Activated CD4-positive, alpha-beta memory T cell treated with anti-CD3 and anti-CD28 coated beads for 36 hours (primary cell): ENCODE measurements at regions of chr1 and their contacts with region 1.

Region 1: DNA sequence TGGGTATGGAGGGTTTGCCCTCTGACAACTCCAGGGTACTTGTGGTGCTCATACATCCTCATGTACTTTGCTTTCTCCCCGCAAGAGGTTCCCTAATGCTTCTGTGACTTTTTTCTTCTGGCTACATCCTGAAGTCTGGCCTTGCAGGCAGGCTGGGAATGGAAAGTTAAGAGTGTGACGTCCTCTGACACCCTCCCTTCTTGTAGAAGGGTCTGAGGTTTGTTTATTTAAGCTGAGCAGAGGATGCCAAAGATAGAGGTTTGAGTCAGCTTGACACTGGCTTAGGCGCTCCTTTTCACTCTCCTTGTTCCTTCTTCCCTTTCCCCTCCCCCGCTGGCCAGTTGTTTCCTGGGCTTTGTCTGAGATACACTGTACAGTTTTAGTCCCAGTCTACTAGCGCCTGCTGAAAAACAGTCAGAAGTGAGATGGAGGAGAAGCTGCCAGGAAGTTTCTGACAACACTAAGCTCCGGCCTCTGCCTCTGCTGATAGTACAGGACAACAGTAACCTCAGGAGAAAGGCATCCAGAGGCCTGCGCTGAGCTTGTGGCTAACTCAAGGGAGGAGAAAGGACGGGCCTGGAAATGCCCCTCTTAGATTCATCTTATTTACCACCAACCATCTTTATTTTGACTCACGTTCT is at the start of gene MACF1:
- DNase-seq: peak; percentile 72
- H3K4me3 Mint-ChIP-seq: peak within 1 kb of the TSS; percentile 81
- H3K27ac Mint-ChIP-seq: peak within 1 kb of the TSS; percentile 96
- H3K4me1 Mint-ChIP-seq: peaks cover 48% of the 10 kb centered on the region
- H3K27me3 Mint-ChIP-seq: no peaks in the 10 kb centered on the region
- total RNA-seq, gene MACF1: 239 to 240 TPM

Region 2: GRCh38 chr1:39091845-39092645 is 112.5 kb before region 1 on chr1:
- CTCF ChIA-PET with region 1: no interaction called
- POLR2A ChIA-PET with region 1: no interaction called
- intact Hi-C with region 1: no loop called
- DNase-seq: peak; percentile 77
- H3K4me3 Mint-ChIP-seq: no peak overlapping the region
- H3K27ac Mint-ChIP-seq: no peak overlapping the region
- H3K4me1 Mint-ChIP-seq: peaks cover 6% of the 10 kb centered on the region
- H3K27me3 Mint-ChIP-seq: peaks cover 3% of the 10 kb centered on the region

Region 3: DNA sequence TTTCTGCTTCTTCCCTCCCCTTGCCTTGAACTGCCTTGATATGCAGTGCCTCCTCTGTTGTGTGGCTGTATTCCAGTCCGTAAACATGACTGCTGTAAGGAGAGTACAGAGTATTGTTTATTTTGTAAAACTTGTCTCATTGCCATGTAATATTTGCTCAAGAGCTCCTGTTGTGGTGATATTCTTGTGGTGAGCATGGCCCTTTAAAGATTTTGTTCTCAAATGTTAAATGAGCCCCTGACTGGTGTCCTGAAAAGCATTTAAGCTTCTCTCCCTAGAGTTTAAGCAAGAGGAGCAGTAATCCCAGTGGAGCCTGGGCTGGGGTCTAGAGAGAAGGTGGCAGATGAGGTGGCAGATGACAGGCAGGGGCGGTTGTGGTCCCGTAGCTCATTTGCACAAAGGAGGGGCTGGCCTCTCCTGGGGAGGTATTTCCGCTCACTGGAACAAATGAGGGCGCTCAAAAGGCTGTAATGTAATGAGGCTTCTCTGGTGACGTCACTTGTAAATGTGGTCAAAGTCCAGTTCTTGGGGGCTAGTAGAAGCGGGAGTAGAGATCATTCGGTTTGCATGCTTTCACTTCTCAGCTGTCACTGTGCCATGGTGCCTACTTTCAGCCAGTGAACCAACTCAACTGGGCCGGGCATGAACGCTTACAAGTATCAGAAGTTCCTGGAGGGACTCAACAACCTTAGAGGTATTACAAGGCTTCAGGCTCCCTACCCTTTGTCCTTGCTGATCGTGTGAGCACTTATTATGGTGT is 46.1 kb before region 1 on chr1:
- CTCF ChIA-PET with region 1: no interaction called
- POLR2A ChIA-PET with region 1: no interaction called
- intact Hi-C with region 1: no loop called
- DNase-seq: no peak
- H3K4me3 Mint-ChIP-seq: no peak overlapping the region
- H3K27ac Mint-ChIP-seq: no peak overlapping the region
- H3K4me1 Mint-ChIP-seq: peaks cover under 1% of the 10 kb centered on the region
- H3K27me3 Mint-ChIP-seq: peaks cover 1% of the 10 kb centered on the region

Region 4: GRCh38 chr1:39183503-39184353 is 20.8 kb before region 1 on chr1:
- CTCF ChIA-PET with region 1: interaction called, 25 read pairs
- POLR2A ChIA-PET with region 1: interaction called, 12 read pairs
- intact Hi-C with region 1: no loop called
- DNase-seq: peak; percentile 91
- H3K4me3 Mint-ChIP-seq: peak overlapping the region; percentile 11
- H3K27ac Mint-ChIP-seq: peak overlapping the region; percentile 91
- H3K4me1 Mint-ChIP-seq: peaks cover 51% of the 10 kb centered on the region
- H3K27me3 Mint-ChIP-seq: no peaks in the 10 kb centered on the region

Region 5: GRCh38 chr1:39214998-39215873 is 10.7 kb after region 1 on chr1:
- CTCF ChIA-PET with region 1: interaction called, 19 read pairs
- POLR2A ChIA-PET with region 1: interaction called, 93 read pairs
- intact Hi-C with region 1: loop called (anchors 1 kb)
- DNase-seq: peak; percentile 65
- H3K4me3 Mint-ChIP-seq: peak overlapping the region; percentile 88
- H3K27ac Mint-ChIP-seq: peak overlapping the region; percentile 88
- H3K4me1 Mint-ChIP-seq: peaks cover 54% of the 10 kb centered on the region
- H3K27me3 Mint-ChIP-seq: no peaks in the 10 kb centered on the region

Region 6: DNA sequence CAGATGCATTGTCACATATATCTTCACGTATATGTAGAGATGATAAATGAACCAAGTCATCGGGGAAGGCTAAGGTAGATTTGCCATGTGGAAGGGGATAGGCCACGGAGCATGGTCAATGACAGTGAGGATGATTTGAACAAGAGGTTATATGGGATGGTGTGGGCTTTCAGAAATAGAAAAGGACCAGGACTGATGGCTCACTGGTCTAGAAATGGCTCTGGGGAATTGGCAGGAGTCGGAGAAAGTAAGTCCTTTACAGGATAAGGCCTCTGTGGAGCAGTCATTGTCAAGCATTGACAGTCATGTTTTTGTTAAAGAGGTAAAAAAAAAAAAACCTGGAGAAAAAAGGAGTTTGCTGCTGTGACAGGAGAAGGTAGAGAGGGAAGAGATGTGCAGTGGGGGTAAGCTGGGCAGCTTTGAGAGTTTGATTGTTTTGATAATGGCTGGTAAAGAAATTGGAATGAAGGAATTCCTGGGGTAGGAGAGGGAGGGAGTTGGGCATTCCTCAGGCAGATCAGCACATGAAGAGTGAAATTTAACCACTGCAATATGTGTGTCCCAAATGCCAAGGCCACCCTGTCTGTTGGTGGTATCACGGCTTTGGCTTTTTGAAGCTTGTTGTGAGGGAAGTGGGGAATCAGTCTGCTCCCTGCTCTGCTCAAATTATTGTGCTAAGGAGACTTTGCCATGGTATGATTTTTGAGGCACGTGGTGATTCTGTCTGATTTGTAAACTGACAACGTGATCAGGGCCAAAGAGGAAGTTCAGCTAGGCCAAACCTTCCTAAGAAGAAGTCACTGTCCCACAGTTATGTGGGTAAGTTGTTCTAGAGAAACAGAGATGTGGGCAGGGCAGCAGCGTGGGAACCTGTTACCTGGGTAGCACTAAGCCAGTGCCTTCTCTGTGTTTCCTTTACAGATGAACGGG is 26.0 kb after region 1 on chr1:
- CTCF ChIA-PET with region 1: interaction called, 11 read pairs
- POLR2A ChIA-PET with region 1: interaction called, 4 read pairs
- intact Hi-C with region 1: no loop called
- DNase-seq: peak; percentile 59
- H3K4me3 Mint-ChIP-seq: peak overlapping the region; percentile 46
- H3K27ac Mint-ChIP-seq: peak overlapping the region; percentile 72
- H3K4me1 Mint-ChIP-seq: peaks cover 57% of the 10 kb centered on the region
- H3K27me3 Mint-ChIP-seq: no peaks in the 10 kb centered on the region

Region 7: GRCh38 chr1:39258146-39258924 is 53.8 kb after region 1 on chr1:
- CTCF ChIA-PET with region 1: interaction called, 37 read pairs
- POLR2A ChIA-PET with region 1: interaction called, 13 read pairs
- intact Hi-C with region 1: loop called (anchors 1 kb)
- DNase-seq: peak; percentile 74
- H3K4me3 Mint-ChIP-seq: no peak overlapping the region
- H3K27ac Mint-ChIP-seq: peak overlapping the region; percentile 56
- H3K4me1 Mint-ChIP-seq: peaks cover 44% of the 10 kb centered on the region
- H3K27me3 Mint-ChIP-seq: no peaks in the 10 kb centered on the region

Region 8: GRCh38 chr1:39268112-39268581 is 63.6 kb after region 1 on chr1:
- CTCF ChIA-PET with region 1: no interaction called
- POLR2A ChIA-PET with region 1: interaction called, 13 read pairs
- intact Hi-C with region 1: no loop called
- DNase-seq: peak; percentile 39
- H3K4me3 Mint-ChIP-seq: peak overlapping the region; percentile 64
- H3K27ac Mint-ChIP-seq: peak overlapping the region; percentile 81
- H3K4me1 Mint-ChIP-seq: peaks cover 89% of the 10 kb centered on the region
- H3K27me3 Mint-ChIP-seq: no peaks in the 10 kb centered on the region

Region 9: GRCh38 chr1:39538588-39539465 is 334.3 kb after region 1 on chr1:
- CTCF ChIA-PET with region 1: no interaction called
- POLR2A ChIA-PET with region 1: no interaction called
- intact Hi-C with region 1: no loop called
- DNase-seq: peak; percentile 57
- H3K4me3 Mint-ChIP-seq: no peak overlapping the region
- H3K27ac Mint-ChIP-seq: no peak overlapping the region
- H3K4me1 Mint-ChIP-seq: no peaks in the 10 kb centered on the region
- H3K27me3 Mint-ChIP-seq: no peaks in the 10 kb centered on the region